Endothelial cell of umbilical vein (primary cell): ENCODE measurements at regions of chr4 and their contacts with region 1.

Region 1: DNA sequence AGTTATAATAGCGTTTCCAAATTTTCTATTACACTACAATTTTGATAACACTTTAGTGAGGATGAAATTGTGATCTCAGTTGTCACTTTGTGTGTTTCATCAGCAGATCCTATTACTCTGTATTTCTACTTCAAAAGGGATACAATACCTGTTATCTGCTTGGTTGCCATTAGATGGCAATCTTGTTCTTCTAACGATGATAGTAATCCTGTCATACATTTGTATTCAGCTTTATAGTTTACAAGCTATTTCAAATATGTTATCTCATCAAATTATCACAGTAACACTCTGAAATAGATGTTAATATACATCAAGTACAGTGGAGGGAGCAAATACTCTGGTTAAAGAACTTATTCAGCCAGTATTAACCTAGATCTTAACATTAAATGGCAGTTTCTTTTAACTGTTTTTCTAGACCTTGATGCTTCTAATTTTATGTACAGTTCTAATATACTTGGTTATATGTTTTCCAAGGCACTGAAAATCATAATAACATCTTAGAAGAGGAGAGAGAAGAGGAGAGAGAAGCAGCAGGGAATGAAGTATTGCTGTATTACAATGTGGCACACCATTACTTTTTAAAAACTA is 292.0 kb downstream of the CCSER1 start:
- DNase-seq: peak; percentile 80
- H3K4me3 ChIP-seq: no peak overlapping the region
- H3K27ac ChIP-seq: no peak overlapping the region
- H3K4me1 ChIP-seq: no peaks in the 10 kb centered on the region
- H3K27me3 ChIP-seq: no peaks in the 10 kb centered on the region
- CTCF ChIP-seq: peak; percentile 37 to 41
- POLR2A ChIP-seq: no peak

Region 2: DNA sequence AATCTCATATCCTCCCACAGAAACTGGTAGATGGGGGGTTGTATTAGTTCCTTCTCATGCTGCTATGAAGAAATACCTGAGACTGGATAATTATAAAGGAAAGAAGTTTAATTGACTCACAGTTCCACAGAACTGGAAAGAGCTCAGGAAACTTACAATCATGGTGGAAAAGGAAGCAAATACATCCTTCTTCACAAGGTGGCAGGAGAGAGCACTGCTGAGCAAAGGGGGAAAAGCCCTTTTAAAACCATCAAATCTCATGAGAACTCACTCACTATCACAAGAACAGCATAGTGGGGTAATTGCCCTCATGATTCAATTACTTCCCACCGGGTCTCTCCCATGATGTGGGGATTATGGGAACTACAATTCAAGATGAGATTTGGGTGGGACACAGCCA is 861.1 kb before region 1 on chr4:
- CTCF ChIA-PET with region 1: no interaction called
- POLR2A ChIA-PET with region 1: no interaction called
- dilution Hi-C with region 1: no loop called
- intact Hi-C with region 1: no loop called
- DNase-seq: no peak
- H3K4me3 ChIP-seq: no peak overlapping the region
- H3K27ac ChIP-seq: no peak overlapping the region
- H3K4me1 ChIP-seq: peaks cover 2% of the 10 kb centered on the region
- H3K27me3 ChIP-seq: no peaks in the 10 kb centered on the region
- CTCF ChIP-seq: peak in 1 of 2 donors; percentile 5
- POLR2A ChIP-seq: no peak

Region 3: GRCh38 chr4:89803915-89804314 is 615.3 kb before region 1 on chr4:
- CTCF ChIA-PET with region 1: no interaction called
- POLR2A ChIA-PET with region 1: no interaction called
- dilution Hi-C with region 1: no loop called
- intact Hi-C with region 1: no loop called
- DNase-seq: peak; percentile 58
- H3K4me3 ChIP-seq: no peak overlapping the region
- H3K27ac ChIP-seq: no peak overlapping the region
- H3K4me1 ChIP-seq: peaks cover 30% of the 10 kb centered on the region
- H3K27me3 ChIP-seq: no peaks in the 10 kb centered on the region
- CTCF ChIP-seq: no peak
- POLR2A ChIP-seq: no peak

Region 4: DNA sequence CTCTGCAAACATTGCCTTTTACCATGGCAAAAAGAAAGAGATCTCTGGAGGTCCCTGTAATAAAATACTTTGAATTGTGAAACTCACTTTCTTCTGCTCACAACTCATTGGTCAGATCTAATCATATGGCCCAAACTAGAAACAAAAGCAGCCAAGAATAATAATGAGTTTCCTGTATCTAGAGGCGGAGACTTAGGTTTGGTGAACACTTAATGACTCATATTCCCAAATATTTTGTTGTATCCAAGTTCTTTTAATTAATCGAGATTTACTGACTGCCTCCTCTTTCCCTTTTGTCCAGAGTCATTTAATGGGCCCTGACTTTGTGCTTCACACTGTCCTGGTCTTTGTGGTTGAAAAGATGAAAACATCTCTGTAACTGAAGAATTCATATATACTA is 101.4 kb before region 1 on chr4:
- CTCF ChIA-PET with region 1: interaction called, 9 read pairs
- POLR2A ChIA-PET with region 1: no interaction called
- dilution Hi-C with region 1: no loop called
- intact Hi-C with region 1: loop called (anchors 2 kb)
- DNase-seq: peak; percentile 82
- H3K4me3 ChIP-seq: no peak overlapping the region
- H3K27ac ChIP-seq: peak overlapping the region; percentile 87
- H3K4me1 ChIP-seq: peaks cover 21% of the 10 kb centered on the region
- H3K27me3 ChIP-seq: peaks cover 0 to 2% of the 10 kb centered on the region in 2 experiments
- CTCF ChIP-seq: no peak
- POLR2A ChIP-seq: no peak

Region 5: GRCh38 chr4:90438540-90438939 is 19.3 kb after region 1 on chr4:
- CTCF ChIA-PET with region 1: interaction called, 11 read pairs
- POLR2A ChIA-PET with region 1: no interaction called
- dilution Hi-C with region 1: no loop called
- intact Hi-C with region 1: no loop called
- DNase-seq: no peak
- H3K4me3 ChIP-seq: no peak overlapping the region
- H3K27ac ChIP-seq: no peak overlapping the region
- H3K4me1 ChIP-seq: peaks cover 3% of the 10 kb centered on the region
- H3K27me3 ChIP-seq: no peaks in the 10 kb centered on the region
- CTCF ChIP-seq: no peak
- POLR2A ChIP-seq: no peak

Region 6: GRCh38 chr4:90792696-90793095 is 373.5 kb after region 1 on chr4:
- CTCF ChIA-PET with region 1: no interaction called
- POLR2A ChIA-PET with region 1: no interaction called
- dilution Hi-C with region 1: no loop called
- intact Hi-C with region 1: no loop called
- DNase-seq: no peak
- H3K4me3 ChIP-seq: no peak overlapping the region
- H3K27ac ChIP-seq: no peak overlapping the region
- H3K4me1 ChIP-seq: no peaks in the 10 kb centered on the region
- H3K27me3 ChIP-seq: no peaks in the 10 kb centered on the region
- CTCF ChIP-seq: no peak
- POLR2A ChIP-seq: no peak

Region 7: GRCh38 chr4:91092398-91093090 is 673.3 kb after region 1 on chr4:
- CTCF ChIA-PET with region 1: interaction called, 21 read pairs
- POLR2A ChIA-PET with region 1: no interaction called
- dilution Hi-C with region 1: no loop called
- intact Hi-C with region 1: loop called (anchors 1 kb)
- DNase-seq: no peak
- H3K4me3 ChIP-seq: no peak overlapping the region
- H3K27ac ChIP-seq: no peak overlapping the region
- H3K4me1 ChIP-seq: no peaks in the 10 kb centered on the region
- H3K27me3 ChIP-seq: no peaks in the 10 kb centered on the region
- CTCF ChIP-seq: no peak
- POLR2A ChIP-seq: no peak

Region 8: GRCh38 chr4:91502365-91502764 is 1083.1 kb after region 1 on chr4:
- CTCF ChIA-PET with region 1: interaction called, 4 read pairs
- POLR2A ChIA-PET with region 1: no interaction called
- dilution Hi-C with region 1: no loop called
- intact Hi-C with region 1: loop called (anchors 1 kb)
- DNase-seq: peak; percentile 8
- H3K4me3 ChIP-seq: no peak overlapping the region
- H3K27ac ChIP-seq: no peak overlapping the region
- H3K4me1 ChIP-seq: no peaks in the 10 kb centered on the region
- H3K27me3 ChIP-seq: no peaks in the 10 kb centered on the region
- CTCF ChIP-seq: peak in 1 of 2 donors; percentile 4
- POLR2A ChIP-seq: no peak

Region 9: GRCh38 chr4:92387459-92388069 is 1968.3 kb after region 1 on chr4:
- CTCF ChIA-PET with region 1: interaction called, 71 read pairs
- POLR2A ChIA-PET with region 1: no interaction called
- dilution Hi-C with region 1: no loop called
- intact Hi-C with region 1: loop called (anchors 1 kb)
- DNase-seq: peak; percentile 63
- H3K4me3 ChIP-seq: no peak overlapping the region
- H3K27ac ChIP-seq: no peak overlapping the region
- H3K4me1 ChIP-seq: no peaks in the 10 kb centered on the region
- H3K27me3 ChIP-seq: no peaks in the 10 kb centered on the region
- CTCF ChIP-seq: peak; percentile 46
- POLR2A ChIP-seq: no peak